Activated B cell treated with CpG ODN at 0.5 μM for 24 hours (primary cell): ENCODE measurements at regions of chr13 and their contacts with region 1.

Region 1: GRCh38 chr13:98504371-98504963 is 72.4 kb downstream of the STK24 start:
- DNase-seq: no peak
- ATAC-seq: peak; percentile 21
- H3K4me3 Mint-ChIP-seq: peak overlapping the region; percentile 42
- H3K27ac Mint-ChIP-seq: peak overlapping the region; percentile 65
- H3K4me1 Mint-ChIP-seq: peaks cover 98% of the 10 kb centered on the region
- H3K27me3 Mint-ChIP-seq: no peaks in the 10 kb centered on the region
- CTCF ChIP-seq: no peak

Region 2: GRCh38 chr13:98484289-98485219 is 19.9 kb before region 1 on chr13:
- CTCF ChIA-PET with region 1: interaction called, 3 read pairs
- POLR2A ChIA-PET with region 1: interaction called, 8 read pairs
- intact Hi-C with region 1: loop called (anchors 2 kb)
- DNase-seq: no peak
- ATAC-seq: no peak
- H3K4me3 Mint-ChIP-seq: no peak overlapping the region
- H3K27ac Mint-ChIP-seq: peak overlapping the region; percentile 22
- H3K4me1 Mint-ChIP-seq: peaks cover 90% of the 10 kb centered on the region
- H3K27me3 Mint-ChIP-seq: no peaks in the 10 kb centered on the region
- CTCF ChIP-seq: no peak

Region 3: GRCh38 chr13:99731747-99732146 is 1227.3 kb after region 1 on chr13:
- CTCF ChIA-PET with region 1: no interaction called
- POLR2A ChIA-PET with region 1: no interaction called
- intact Hi-C with region 1: no loop called
- DNase-seq: no peak
- ATAC-seq: no peak
- H3K4me3 Mint-ChIP-seq: no peak overlapping the region
- H3K27ac Mint-ChIP-seq: no peak overlapping the region
- H3K4me1 Mint-ChIP-seq: peaks cover 8% of the 10 kb centered on the region
- H3K27me3 Mint-ChIP-seq: no peaks in the 10 kb centered on the region
- CTCF ChIP-seq: no peak